ENCODE measurements at regions of chr13 and their contacts with region 1.

Region 1: DNA sequence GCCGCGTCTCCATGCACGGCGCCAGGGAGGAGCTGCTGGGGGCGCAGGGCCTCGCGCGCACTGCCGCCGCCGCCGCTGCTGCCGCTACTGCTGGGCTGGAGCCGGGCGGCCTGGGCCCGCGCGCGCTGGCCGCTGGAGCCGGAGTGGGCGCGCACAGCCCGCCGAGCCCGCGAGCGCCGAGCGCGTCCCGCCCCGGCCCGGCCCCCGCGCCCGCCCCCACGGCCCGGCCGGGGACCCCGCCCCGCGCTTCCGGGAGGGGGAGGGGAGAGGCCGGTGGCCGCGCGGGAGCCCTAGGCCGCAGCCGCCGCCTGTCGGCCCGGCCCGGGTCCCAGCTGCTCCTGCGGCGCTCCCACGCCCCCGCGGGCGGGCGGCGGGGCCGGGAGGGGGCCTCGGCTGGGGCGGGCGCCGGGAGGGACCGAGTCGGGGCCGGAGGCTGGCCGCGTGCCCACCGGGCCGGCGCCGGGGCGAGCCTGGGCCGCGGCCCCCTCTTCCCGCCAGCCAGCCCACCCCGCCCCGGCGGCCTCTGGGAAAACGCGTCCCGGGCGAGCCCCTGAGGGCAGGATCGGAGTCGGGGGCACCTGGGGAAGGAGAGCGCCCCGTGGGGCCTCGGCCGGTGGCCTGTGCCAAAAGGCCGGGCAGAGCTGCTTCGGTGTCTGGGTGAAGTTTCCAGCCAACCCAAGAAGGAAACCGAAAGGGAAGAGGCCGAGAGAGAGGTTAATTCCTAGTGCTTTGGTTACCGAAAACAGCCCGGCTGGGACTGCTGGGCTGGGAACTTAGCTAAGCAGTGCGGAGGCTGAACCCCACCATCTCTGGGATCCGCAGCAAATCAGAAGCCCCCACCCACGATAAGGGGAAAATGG is at the start of gene STK24:
- DNase-seq: peak; percentile 86
- H3K4me3 ChIP-seq: peak within 1 kb of the TSS; percentile 88 to 99 (median 92)
- H3K27ac ChIP-seq: peak within 1 kb of the TSS; percentile 98 to 100 (median 99)
- H3K4me1 ChIP-seq: peaks cover 0 to 50% (median 46%) of the 10 kb centered on the region in 4 donors
- H3K27me3 ChIP-seq: no peaks in the 10 kb centered on the region
- CTCF ChIP-seq: no peak
- EP300 ChIP-seq: no peak
- POLR2A ChIP-seq: no peak
- total RNA-seq, gene STK24: 59.7 to 78.9 (median 64.4) TPM

Region 2: GRCh38 chr13:98105929-98106336 is 471.3 kb before region 1 on chr13:
- intact Hi-C with region 1: no loop called
- DNase-seq: no peak
- H3K4me3 ChIP-seq: no peak overlapping the region
- H3K27ac ChIP-seq: no peak overlapping the region
- H3K4me1 ChIP-seq: no peaks in the 10 kb centered on the region
- H3K27me3 ChIP-seq: no peaks in the 10 kb centered on the region
- CTCF ChIP-seq: no peak
- EP300 ChIP-seq: no peak
- POLR2A ChIP-seq: no peak

Region 3: GRCh38 chr13:98451676-98452470 is 125.3 kb before region 1 on chr13:
- intact Hi-C with region 1: loop called (anchors 1 kb)
- DNase-seq: peak; percentile 92
- H3K4me3 ChIP-seq: no peak overlapping the region
- H3K27ac ChIP-seq: peak overlapping the region; percentile 64 to 87 (median 80)
- H3K4me1 ChIP-seq: peaks cover 0 to 60% (median 48%) of the 10 kb centered on the region in 4 donors
- H3K27me3 ChIP-seq: no peaks in the 10 kb centered on the region
- CTCF ChIP-seq: no peak
- EP300 ChIP-seq: peak in 3 of 4 donors; percentile 49 to 90 (median 53)
- POLR2A ChIP-seq: no peak

Region 4: DNA sequence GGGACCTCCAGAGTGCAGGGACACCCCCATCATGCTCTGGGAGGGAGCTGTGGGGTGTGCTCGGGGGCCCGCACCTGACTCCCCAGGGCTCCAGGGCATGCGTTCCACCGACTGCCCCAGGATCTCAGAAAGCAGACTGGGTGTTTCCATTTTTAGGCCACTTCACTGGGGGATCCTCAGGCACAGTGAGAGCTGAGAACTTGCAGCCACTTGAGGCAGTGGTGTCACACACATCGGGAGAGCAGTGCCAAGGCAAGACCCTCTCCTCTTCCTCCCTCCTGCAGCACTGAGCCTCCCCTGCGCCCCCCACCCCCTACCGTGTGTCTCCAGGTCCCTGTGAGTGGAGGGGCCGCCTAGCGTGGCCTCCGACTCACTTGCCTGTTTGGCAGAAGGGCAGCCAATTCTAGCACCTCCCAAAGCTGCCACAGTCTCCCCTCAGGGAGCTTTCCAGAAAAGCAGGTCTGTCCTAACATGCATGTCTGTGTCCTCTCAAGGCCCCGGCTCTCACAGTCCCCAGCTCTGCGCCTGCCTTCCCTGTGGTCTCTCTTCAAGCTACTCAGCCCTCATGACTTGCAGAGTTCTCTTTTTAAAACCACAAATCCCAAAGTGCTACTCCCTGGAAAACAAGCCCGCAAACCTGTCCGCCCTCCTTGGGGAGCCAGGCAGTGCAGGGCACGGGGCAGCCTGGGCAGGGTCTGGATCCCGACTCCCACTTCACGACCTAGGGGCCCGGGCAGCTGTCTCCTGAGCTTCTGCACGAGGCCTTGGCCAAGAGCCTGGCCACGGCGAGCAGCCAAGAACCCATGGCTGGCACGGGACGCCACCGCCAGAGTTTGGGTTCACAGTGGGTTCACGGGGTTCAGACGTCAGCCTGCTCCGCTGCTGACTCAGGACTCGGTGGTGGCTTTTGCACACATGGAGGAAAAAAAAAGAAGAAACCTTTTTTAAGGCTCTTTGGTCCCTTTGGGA is 94.4 kb before region 1 on chr13:
- intact Hi-C with region 1: loop called (anchors 2 kb)
- DNase-seq: peak; percentile 94
- H3K4me3 ChIP-seq: no peak overlapping the region
- H3K27ac ChIP-seq: peak overlapping the region; percentile 73 to 88 (median 81)
- H3K4me1 ChIP-seq: peaks cover 0 to 100% (median 96%) of the 10 kb centered on the region in 4 donors
- H3K27me3 ChIP-seq: no peaks in the 10 kb centered on the region
- CTCF ChIP-seq: no peak
- EP300 ChIP-seq: peak; percentile 69 to 96 (median 88)
- POLR2A ChIP-seq: no peak

Region 5: GRCh38 chr13:98495627-98496478 is 81.3 kb before region 1 on chr13:
- intact Hi-C with region 1: loop called (anchors 5 kb)
- DNase-seq: peak; percentile 87
- H3K4me3 ChIP-seq: peak overlapping the region in 1 of 4 donors; percentile 13
- H3K27ac ChIP-seq: peak overlapping the region; percentile 77 to 84 (median 80)
- H3K4me1 ChIP-seq: peaks cover 0 to 81% (median 62%) of the 10 kb centered on the region in 4 donors
- H3K27me3 ChIP-seq: no peaks in the 10 kb centered on the region
- CTCF ChIP-seq: no peak
- EP300 ChIP-seq: peak in 1 of 4 donors; percentile 19
- POLR2A ChIP-seq: no peak

Region 6: GRCh38 chr13:98653463-98653985 is 76.3 kb after region 1 on chr13:
- intact Hi-C with region 1: loop called (anchors 5 kb)
- DNase-seq: peak; percentile 90
- H3K4me3 ChIP-seq: no peak overlapping the region
- H3K27ac ChIP-seq: no peak overlapping the region
- H3K4me1 ChIP-seq: no peaks in the 10 kb centered on the region
- H3K27me3 ChIP-seq: no peaks in the 10 kb centered on the region
- CTCF ChIP-seq: peak; percentile 85 to 94 (median 90)
- EP300 ChIP-seq: no peak
- POLR2A ChIP-seq: no peak

Region 7: DNA sequence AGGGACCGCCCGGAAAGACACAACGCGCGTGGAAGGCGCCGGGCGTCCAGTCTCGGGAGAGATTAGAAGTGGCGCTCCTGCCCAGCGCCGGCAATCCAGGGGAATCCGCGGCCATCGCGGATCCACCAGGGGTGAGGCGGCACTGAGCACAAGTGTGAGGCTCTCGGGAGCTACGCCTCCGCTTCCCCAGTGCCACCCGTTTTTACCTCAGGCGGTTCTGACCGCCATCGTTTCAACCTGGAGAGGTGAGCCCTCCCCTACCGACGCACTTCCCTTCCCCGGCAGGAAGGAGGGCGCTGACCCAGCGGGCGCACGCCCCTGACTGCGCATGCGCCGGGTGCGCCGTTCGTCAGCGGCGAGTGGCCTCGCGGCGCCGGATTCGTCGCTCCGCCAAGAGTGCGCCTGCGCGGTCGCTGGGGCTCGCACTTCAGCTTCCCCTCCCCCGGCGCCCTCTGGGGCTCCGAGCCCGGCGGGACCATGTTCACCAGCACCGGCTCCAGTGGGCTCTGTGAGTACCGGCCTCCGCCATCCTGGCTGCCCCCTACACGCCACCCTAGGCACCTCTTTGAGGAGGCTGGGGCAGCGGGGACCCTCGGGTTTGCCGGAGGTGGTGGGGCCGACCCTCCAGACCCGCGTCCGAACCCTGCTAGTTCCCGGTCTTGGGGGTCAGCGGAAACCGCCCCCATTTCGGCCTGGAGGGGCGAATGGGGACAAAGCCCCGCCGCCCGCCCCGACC is 623.4 kb after region 1 on chr13 and contains the start of gene UBAC2:
- intact Hi-C with region 1: loop called (anchors 5 kb)
- DNase-seq: peak; percentile 97
- H3K4me3 ChIP-seq: peak within 1 kb of the TSS; percentile 67 to 92 (median 88)
- H3K27ac ChIP-seq: peak within 1 kb of the TSS; percentile 90 to 97 (median 96)
- H3K4me1 ChIP-seq: peaks cover 0 to 34% (median 10%) of the 10 kb centered on the region in 4 donors
- H3K27me3 ChIP-seq: no peaks in the 10 kb centered on the region
- CTCF ChIP-seq: peak in 2 of 4 experiments; percentile 6 to 15
- EP300 ChIP-seq: no peak
- POLR2A ChIP-seq: peak; percentile 87 to 88
- total RNA-seq, gene UBAC2: 47.4 to 54.6 (median 49.2) TPM